Calu3 (cell line): ENCODE measurements at regions of chr2 and their contacts with region 1.

Region 1: DNA sequence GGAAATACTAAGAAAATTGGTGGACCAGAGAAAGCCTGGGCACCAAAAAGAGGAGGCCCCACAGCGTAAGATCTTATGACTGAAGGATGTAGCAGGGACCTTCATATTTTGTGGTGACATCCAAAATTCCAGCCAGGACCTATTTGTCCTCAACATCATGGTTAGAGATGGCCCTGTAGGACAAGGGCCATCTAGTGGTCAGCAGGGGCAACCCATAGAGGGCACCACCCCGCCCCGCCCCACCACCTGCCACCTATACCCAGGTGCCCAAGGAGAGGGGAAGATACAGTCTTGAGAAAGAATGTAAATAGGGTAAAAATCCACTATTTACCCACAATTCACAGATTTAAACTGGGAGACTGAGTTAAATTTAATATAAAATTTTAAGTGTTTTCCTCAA is 59.6 kb upstream of the TMEM163 start:
- DNase-seq: no peak
- H3K4me3 Mint-ChIP-seq: no peak overlapping the region
- H3K27ac Mint-ChIP-seq: no peak overlapping the region
- H3K4me1 Mint-ChIP-seq: peaks cover 23% of the 10 kb centered on the region
- H3K27me3 Mint-ChIP-seq: no peaks in the 10 kb centered on the region
- CTCF ChIP-seq: peak; percentile 35

Region 2: GRCh38 chr2:134466141-134466540 is 312.2 kb before region 1 on chr2:
- CTCF ChIA-PET with region 1: interaction called, 9 read pairs
- intact Hi-C with region 1: loop called (anchors 5 kb)
- DNase-seq: peak; percentile 74
- H3K4me3 Mint-ChIP-seq: no peak overlapping the region
- H3K27ac Mint-ChIP-seq: no peak overlapping the region
- H3K4me1 Mint-ChIP-seq: peaks cover 15% of the 10 kb centered on the region
- H3K27me3 Mint-ChIP-seq: no peaks in the 10 kb centered on the region
- CTCF ChIP-seq: no peak

Region 3: DNA sequence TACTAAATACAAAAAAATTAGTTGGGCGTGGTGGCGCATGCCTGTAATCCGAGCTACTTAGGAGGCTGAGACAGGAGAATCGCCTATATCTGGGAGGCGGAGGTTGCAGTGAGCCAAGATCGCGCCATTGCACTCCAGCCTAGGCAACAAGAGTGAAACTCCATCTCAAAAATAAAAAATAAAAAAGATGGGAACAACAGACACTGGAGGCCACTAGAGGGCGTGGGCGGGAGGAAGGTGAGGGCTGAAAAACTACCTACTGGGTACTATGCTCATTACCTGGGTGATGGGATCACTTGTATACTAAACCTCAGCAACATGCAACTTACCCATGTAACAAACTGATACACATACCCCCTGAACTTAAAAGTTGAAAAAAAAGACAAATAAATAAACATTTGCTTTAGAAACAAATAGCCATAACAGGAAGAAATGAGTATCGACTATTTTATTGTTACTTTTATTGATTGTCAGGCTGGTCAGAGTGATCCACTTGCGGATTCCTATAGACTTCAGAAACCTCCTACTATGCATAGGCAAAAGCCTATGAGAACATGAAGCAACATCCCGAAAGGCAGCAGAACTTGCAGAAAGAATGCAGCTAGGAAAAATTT is 120.6 kb before region 1 on chr2:
- CTCF ChIA-PET with region 1: no interaction called
- intact Hi-C with region 1: loop called (anchors 2 kb)
- DNase-seq: peak; percentile 63
- H3K4me3 Mint-ChIP-seq: no peak overlapping the region
- H3K27ac Mint-ChIP-seq: no peak overlapping the region
- H3K4me1 Mint-ChIP-seq: no peaks in the 10 kb centered on the region
- H3K27me3 Mint-ChIP-seq: no peaks in the 10 kb centered on the region
- CTCF ChIP-seq: peak; percentile 71

Region 4: DNA sequence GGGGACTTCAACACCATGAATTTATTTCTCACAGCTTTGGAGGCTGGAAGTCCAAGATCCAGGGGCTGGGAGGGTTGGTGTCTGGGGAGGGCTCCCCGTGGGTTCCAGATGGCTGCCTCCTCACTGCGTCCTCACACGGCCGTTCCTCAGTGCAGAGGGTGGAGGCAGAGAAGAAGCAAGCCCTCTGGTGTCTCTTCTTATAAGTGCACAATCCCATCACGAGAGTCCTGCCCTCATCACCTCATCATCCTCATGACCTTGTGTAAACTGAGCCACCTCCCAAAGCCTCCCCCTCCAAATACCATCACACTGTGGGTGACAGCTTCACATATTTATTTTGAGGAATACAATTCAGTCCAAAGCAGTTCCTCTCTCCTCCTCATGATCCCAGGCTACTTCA is 85.9 kb before region 1 on chr2:
- CTCF ChIA-PET with region 1: no interaction called
- intact Hi-C with region 1: no loop called
- DNase-seq: no peak
- H3K4me3 Mint-ChIP-seq: no peak overlapping the region
- H3K27ac Mint-ChIP-seq: no peak overlapping the region
- H3K4me1 Mint-ChIP-seq: no peaks in the 10 kb centered on the region
- H3K27me3 Mint-ChIP-seq: no peaks in the 10 kb centered on the region
- CTCF ChIP-seq: no peak

Region 5: DNA sequence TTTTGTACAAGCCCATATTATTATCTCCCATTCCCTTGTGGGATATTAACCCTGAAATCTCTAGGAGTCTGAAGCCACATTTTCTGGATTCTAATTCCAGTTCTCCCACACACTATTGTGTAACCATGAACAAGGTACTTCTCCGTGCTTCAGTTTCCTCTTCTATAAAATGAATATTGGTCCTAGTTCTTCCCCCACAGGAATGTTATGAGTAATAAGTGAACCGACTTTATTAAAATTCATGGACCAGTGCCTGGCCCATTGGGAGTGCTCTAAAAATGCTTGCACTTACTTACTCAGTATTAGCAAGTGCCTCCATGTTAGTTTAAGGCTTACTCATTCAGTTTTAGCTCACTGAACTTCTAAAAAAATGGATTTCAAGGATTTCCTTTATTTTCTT is 58.6 kb after region 1 on chr2:
- CTCF ChIA-PET with region 1: no interaction called
- intact Hi-C with region 1: loop called (anchors 5 kb)
- DNase-seq: no peak
- H3K4me3 Mint-ChIP-seq: no peak overlapping the region
- H3K27ac Mint-ChIP-seq: peak overlapping the region; percentile 32
- H3K4me1 Mint-ChIP-seq: peaks cover 25% of the 10 kb centered on the region
- H3K27me3 Mint-ChIP-seq: no peaks in the 10 kb centered on the region
- CTCF ChIP-seq: no peak

Region 6: DNA sequence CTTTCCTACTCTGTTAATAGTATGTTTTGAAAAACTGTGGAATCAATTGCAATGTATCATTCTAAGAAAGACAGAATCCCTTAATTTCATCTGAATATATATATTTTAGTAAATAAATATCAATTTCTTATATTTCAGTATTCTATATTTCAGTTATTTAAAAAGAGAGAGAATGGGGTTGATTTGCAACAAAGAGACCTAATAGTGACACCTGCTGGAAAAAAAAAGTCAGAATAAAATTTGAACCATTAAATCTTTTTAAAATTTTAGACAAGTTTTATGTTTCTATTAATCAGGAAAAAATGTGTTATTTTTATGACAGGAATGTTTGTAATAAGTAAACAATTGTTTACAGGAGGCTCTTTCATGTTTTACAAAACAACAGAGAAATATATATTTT is 119.6 kb after region 1 on chr2:
- CTCF ChIA-PET with region 1: no interaction called
- intact Hi-C with region 1: loop called (anchors 5 kb)
- DNase-seq: no peak
- H3K4me3 Mint-ChIP-seq: no peak overlapping the region
- H3K27ac Mint-ChIP-seq: no peak overlapping the region
- H3K4me1 Mint-ChIP-seq: peaks cover 5% of the 10 kb centered on the region
- H3K27me3 Mint-ChIP-seq: no peaks in the 10 kb centered on the region
- CTCF ChIP-seq: peak; percentile 46

Region 7: DNA sequence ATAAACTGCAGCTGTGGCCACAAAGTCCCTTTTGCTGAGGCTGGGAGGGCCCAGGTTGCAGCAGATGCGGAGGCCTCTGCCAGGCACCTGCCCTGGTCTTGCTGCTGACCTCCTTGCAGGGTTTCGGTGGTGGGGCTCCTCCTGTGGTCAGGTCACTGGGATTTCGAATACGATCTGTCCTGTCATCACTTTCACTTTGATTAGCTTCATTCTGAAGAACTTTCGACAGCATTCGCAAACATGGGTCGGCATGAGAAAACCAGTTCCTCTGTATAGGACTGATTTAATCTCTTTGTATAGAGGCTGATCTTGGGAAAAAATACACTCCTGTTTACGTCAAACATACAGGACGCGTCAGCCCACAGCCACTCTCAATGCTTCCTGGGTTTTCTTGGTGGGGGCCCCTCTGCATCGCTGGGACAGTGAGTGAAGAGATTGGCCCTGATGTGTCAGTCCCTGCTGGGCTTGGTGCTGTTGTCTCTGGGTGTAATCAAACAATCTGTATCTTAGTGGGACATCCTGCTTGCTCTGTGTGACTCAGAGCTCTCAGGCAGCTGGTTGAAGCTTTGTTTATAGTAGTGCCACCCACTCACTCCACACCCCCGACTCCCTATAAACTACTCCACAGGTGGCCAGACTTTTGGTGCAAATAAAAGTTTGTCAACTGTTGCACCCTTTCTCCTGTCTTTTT is 1548.9 kb after region 1 on chr2:
- CTCF ChIA-PET with region 1: no interaction called
- intact Hi-C with region 1: no loop called
- DNase-seq: no peak
- H3K4me3 Mint-ChIP-seq: peak overlapping the region; percentile 15
- H3K27ac Mint-ChIP-seq: no peak overlapping the region
- H3K4me1 Mint-ChIP-seq: peaks cover 9% of the 10 kb centered on the region
- H3K27me3 Mint-ChIP-seq: no peaks in the 10 kb centered on the region
- CTCF ChIP-seq: no peak